ENCODE measurements at regions of chr2 and their contacts with region 1.

Region 1: DNA sequence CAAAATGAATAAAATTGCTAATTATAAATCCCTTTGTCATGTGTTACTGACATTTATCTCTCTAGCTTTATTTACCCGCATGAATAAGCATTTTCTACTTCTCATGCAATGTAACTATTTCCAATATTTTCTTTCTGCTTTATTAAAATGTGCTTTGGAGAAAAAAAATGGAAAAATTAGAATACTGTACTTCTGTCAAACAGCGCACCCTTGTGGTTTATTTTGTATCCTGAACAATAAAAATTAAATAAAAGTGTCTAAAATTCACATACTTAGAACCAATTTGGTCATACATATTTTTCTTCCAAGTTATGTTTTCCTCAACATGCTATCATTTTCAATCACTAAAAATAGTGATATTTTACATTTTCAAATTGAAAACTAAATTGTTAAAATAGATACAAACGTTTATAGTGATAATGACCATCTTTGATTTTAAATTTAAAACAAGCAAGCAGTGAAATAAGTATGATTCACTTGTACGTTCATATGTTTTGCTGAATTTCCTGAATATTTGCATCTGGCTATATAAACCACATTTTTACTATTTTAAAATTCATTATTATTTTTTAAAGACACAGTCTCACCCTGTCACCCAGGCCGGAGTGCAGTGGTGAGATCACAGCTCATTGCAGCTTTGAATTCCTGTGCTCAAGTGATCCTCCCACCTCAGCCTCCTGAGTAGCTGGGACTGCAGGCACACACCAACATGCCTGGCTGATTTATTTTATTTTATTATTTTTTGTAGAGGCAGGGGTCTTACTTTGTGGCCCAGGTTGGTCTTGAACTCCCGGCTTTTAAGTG is 95.9 kb upstream of the GRB14 start:
- DNase-seq: peak; percentile 56
- ATAC-seq: no peak
- H3K4me3 ChIP-seq: no peak overlapping the region
- H3K27ac ChIP-seq: no peak overlapping the region
- H3K4me1 ChIP-seq: 0 out of 2 replicates have a peak, but pooled peaks cover 6% of the 10 kb centered on the region
- H3K27me3 ChIP-seq: no peaks in the 10 kb centered on the region
- CTCF ChIP-seq: peak; percentile 80

Region 2: DNA sequence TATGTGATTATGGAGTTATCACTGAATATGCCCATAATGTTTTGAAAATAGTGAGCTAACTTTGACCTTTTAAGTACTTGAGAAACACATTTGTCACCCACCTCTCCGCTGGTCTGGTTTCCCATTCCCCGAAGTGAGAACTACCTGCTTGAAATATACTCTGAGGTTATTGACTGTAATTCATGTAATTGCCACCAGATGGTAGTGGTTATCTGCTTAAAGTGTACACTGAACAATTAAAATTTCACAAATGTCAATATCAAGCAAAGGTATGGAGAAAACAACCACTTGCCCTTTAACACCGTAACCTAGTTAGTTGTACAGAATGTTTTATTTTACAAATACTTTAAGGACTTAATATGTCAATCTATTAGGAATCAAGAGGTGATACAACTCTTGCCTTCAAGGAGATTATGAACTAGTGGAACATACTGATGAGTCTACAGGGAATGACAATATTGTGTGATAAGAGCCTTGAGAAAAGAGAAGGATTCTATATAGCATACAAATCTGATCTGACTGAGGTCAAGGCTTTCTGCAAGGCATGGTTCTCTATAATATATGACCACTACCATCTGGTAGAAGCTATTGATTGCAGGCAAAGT is 1561.8 kb before region 1 on chr2:
- CTCF ChIA-PET with region 1: no interaction called
- POLR2A ChIA-PET with region 1: no interaction called
- intact Hi-C with region 1: loop called (anchors 10 kb)
- DNase-seq: peak; percentile 67
- ATAC-seq: peak; percentile 70
- H3K4me3 ChIP-seq: no peak overlapping the region
- H3K27ac ChIP-seq: no peak overlapping the region
- H3K4me1 ChIP-seq: peaks cover 6% of the 10 kb centered on the region; the same call in 1 of the 2 replicates
- H3K27me3 ChIP-seq: peaks cover 20% of the 10 kb centered on the region
- CTCF ChIP-seq: peak; percentile 74

Region 3: GRCh38 chr2:164560181-164560792 is 156.9 kb before region 1 on chr2:
- CTCF ChIA-PET with region 1: interaction called, 3 read pairs
- POLR2A ChIA-PET with region 1: no interaction called
- intact Hi-C with region 1: loop called (anchors 1 kb)
- DNase-seq: peak; percentile 60
- ATAC-seq: no peak
- H3K4me3 ChIP-seq: no peak overlapping the region
- H3K27ac ChIP-seq: no peak overlapping the region
- H3K4me1 ChIP-seq: no peaks in the 10 kb centered on the region
- H3K27me3 ChIP-seq: peaks cover 72% of the 10 kb centered on the region
- CTCF ChIP-seq: peak; percentile 79

Region 4: GRCh38 chr2:164697674-164698461 is 19.3 kb before region 1 on chr2:
- CTCF ChIA-PET with region 1: no interaction called
- POLR2A ChIA-PET with region 1: no interaction called
- intact Hi-C with region 1: loop called (anchors 1 kb)
- DNase-seq: peak; percentile 54
- ATAC-seq: peak; percentile 44; the same call in 1 of the 2 replicates
- H3K4me3 ChIP-seq: no peak overlapping the region
- H3K27ac ChIP-seq: no peak overlapping the region
- H3K4me1 ChIP-seq: peaks cover 19% of the 10 kb centered on the region
- H3K27me3 ChIP-seq: no peaks in the 10 kb centered on the region
- CTCF ChIP-seq: peak; percentile 79

Measured in PC-3 (cell line).